ENCODE measurements at regions of chr3 and their contacts with region 1.

Region 1: DNA sequence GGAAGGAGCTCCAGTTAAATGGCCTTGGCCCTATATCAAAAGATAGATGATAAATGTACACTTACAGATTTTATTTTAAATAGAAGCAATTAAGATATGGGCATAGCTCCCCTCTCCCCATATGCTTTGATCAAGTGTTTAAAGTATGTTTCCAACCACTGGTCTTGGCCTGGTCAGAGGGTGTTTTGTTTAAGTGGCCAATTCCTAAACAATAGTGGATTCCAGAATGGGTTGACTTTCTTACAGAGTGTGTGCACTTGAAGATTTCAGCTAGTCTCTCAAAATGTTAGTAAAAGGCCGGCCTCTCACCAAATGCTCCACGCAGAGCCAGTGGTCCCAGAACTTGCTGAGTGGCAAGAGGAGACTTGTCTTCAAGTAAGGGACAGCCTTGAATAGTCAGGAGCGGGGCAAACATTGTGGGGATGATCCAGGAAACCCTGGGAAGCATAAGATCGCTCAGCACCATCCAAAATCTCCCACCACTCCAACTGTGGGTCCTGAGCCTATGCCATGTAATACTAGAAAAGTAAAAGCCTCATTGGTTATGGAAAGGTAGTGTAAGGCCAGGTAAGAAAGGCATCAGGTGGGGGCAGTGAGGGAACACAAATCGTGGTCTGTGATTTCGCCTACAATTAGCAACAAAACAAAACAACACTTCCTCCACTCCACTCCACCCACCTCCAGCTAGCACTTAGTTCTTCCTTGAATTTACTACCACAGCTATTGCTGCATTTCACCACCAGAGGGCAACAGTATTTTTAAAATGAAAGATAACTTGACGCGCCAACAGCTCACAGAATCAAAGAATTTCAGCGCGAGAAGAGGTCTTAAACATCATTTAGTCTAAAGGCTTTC is 4.8 kb downstream of the RARRES1 start:
- DNase-seq: peak; percentile 52
- H3K4me3 Mint-ChIP-seq: peak overlapping the region; percentile 28
- H3K27ac Mint-ChIP-seq: no peak overlapping the region
- H3K4me1 Mint-ChIP-seq: peaks cover 30% of the 10 kb centered on the region
- H3K27me3 Mint-ChIP-seq: no peaks in the 10 kb centered on the region

Region 2: DNA sequence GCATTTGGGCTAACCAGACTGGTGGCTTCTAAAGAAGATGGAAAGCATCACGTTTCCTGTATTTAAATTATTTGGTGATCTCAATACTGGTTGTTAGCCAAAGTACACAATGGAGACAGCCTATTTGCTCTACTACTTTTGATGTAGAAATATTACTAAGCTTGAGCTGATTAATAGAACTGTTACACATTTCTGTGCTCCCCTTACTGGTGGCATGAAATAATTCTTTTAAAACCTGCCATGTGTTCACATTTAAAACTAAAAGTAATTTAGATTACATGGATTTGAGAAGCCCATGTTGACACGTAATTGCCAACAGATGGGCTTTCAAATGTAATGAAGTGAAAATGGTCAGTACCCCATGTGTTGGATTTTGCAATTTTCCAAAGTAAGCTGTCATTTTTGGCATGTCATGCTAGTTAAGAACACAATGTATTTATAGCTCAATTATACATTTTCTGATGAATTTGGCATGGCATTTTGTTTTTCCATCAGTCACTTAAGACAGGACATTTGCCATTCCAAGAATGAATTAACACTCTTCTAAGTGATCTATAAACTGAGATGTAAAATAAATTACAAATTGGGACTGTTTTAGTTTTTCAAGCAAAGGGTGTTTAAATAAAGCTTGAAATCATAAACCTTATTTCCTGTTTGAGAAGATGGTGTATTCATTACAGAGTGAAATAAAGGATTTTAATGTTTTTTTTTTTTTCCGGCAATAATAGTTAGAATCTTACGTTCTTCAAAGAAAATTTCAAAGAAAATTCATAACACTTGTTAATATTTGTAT is 15.6 kb after region 1 on chr3:
- CTCF ChIA-PET with region 1: interaction called, 30 read pairs
- POLR2A ChIA-PET with region 1: interaction called, 3 read pairs
- DNase-seq: no peak
- H3K4me3 Mint-ChIP-seq: no peak overlapping the region
- H3K27ac Mint-ChIP-seq: no peak overlapping the region
- H3K4me1 Mint-ChIP-seq: peaks cover 14% of the 10 kb centered on the region
- H3K27me3 Mint-ChIP-seq: no peaks in the 10 kb centered on the region

Measured in activated CD4-positive, alpha-beta memory T cell treated with anti-CD3 and anti-CD28 coated beads, Interleukin-2, amount 10 ng/mL, durations not matched to agents 7 days and 5 days (primary cell).